ENCODE measurements at regions of chr7 and their contacts with region 1.

Region 1: DNA sequence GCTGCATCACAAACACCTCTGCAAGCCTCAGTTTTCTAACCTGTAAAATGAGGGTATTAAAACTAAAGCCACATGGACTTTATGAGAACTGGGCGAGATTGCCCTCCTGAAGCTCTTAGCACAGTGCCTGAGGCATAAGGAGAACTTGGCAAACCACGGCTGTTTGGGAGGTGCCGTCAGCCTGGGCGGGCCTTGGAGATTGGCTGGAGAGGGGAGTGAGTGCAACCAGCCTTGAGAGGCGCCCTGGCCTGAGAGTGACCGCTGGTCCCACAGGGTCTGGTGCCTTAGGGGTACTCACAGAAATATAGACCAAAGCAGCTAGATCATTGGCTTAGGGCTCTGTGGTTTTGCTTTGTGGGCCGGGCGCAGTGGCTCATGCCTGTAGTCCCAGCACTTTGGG is 5.5 kb upstream of the TNS3 start:
- DNase-seq: no peak
- H3K4me3 ChIP-seq: no peak overlapping the region
- H3K27ac ChIP-seq: no peak overlapping the region
- H3K4me1 ChIP-seq: peaks cover 39% of the 10 kb centered on the region
- H3K27me3 ChIP-seq: no peaks in the 10 kb centered on the region
- CTCF ChIP-seq: no peak
- POLR2A ChIP-seq: no peak

Region 2: DNA sequence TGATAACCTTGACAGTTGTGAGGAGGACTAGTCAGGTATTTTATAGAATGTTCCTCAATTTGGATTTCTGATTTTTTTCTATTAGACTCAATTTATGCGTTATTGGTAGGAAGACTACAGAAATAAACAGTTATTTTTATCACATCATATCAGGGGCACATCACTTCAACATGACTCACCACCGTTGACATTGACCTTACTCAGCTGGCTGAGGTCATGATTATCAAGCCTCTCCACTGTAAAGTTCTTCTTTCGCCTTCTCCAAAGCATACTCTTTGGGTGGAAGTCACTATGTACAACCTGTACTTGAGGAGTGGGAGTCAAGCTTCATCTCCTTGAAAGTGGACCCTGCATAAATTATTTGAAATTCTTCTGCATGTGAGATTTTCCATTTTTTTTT is 1472.0 kb before region 1 on chr7:
- intact Hi-C with region 1: loop called (anchors 5 kb)
- DNase-seq: no peak
- H3K4me3 ChIP-seq: no peak overlapping the region
- H3K27ac ChIP-seq: no peak overlapping the region
- H3K4me1 ChIP-seq: no peaks in the 10 kb centered on the region
- H3K27me3 ChIP-seq: no peaks in the 10 kb centered on the region
- CTCF ChIP-seq: no peak
- POLR2A ChIP-seq: no peak

Measured in vagina (tissue), 2 donors.